ENCODE measurements at regions of chr2 and their contacts with region 1.

Region 1: GRCh38 chr2:32277674-32278482 is at the start of gene YIPF4:
- DNase-seq: peak; percentile 86 to 90
- ATAC-seq: peak; percentile 97 to 100 (median 99)
- H3K4me3 ChIP-seq: peak within 1 kb of the TSS; percentile 70 to 99 (median 94)
- H3K27ac ChIP-seq: peak within 1 kb of the TSS; percentile 67 to 95 (median 88)
- H3K4me1 ChIP-seq: peaks cover 0 to 45% (median 30%) of the 10 kb centered on the region in 9 donors
- H3K27me3 ChIP-seq: no peaks in the 10 kb centered on the region
- CTCF ChIP-seq: no peak
- total RNA-seq, gene YIPF4: 55.6 to 94.3 (median 66.4) TPM

Region 2: DNA sequence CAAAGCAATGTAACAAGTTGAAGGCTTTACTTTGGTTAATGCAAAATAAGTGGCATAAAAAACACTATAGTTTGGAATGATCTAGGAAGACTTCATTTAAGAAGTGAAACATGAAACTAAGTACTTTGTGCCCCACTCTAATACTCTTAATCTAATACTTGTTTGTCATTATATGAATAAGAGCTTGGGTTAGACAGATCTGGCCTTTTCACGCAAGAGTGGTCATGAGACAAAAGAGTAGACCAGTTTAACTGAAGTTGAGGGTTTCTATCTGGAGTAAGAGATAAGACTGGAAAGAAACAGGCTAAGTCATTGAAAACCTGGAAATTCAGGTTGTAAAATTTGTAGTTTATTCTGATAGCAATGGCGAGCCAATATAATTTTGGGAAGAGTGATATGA is 109.4 kb before region 1 on chr2:
- intact Hi-C with region 1: loop called in 1 of 10 experiments (anchors 5 kb)
- DNase-seq: no peak
- ATAC-seq: no peak
- H3K4me3 ChIP-seq: no peak overlapping the region
- H3K27ac ChIP-seq: no peak overlapping the region
- H3K4me1 ChIP-seq: peaks cover 0 to 26% (median 17%) of the 10 kb centered on the region in 9 donors
- H3K27me3 ChIP-seq: no peaks in the 10 kb centered on the region
- CTCF ChIP-seq: no peak